Transverse colon (tissue), 4 donors: ENCODE measurements at regions of chr4 and their contacts with region 1.

Region 1: DNA sequence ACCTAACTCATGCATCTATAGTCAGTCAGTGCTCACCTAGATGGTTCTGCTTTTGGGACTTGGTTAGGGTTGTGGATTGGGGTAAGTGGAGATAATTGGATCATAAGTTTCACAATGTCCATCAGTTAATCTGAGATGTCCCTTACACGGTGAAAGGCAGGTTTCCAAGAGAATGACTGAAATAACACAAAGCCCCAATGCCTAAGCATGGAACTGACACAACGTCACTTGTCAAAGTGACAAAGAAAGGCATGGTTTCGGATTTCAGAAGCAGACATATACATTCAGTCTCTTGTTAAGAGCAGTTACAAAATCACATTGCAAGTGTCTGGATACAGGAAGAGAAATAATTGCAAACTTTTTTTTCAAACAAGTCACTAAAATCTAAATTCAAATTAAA is 1456.9 kb downstream of the TECRL start:
- DNase-seq: no peak
- H3K4me3 ChIP-seq: no peak overlapping the region
- H3K27ac ChIP-seq: no peak overlapping the region
- H3K4me1 ChIP-seq: no peaks in the 10 kb centered on the region
- H3K27me3 ChIP-seq: no peaks in the 10 kb centered on the region
- CTCF ChIP-seq: no peak
- EP300 ChIP-seq: no peak
- POLR2A ChIP-seq: no peak

Region 2: DNA sequence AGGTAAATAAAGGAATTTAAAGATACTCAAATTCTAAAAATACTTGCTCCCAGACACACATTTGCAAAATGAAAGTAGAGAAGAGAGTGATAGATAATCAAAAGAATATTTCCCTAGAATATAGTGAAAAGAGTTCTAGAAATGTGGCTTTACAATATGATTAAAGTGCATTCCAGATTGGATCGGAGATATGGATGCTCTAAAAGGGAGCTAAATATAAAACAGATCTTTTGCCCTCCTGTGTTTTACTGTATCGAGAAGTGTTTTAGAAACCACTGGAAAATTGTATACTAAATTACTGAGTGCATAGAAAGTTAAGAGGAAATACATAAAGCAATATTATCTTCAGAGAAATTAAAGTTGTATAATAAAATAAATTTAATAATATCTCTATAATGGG is 64.9 kb after region 1 on chr4:
- in situ Hi-C with region 1: loop called in 1 of 4 experiments (anchors 10 kb)
- intact Hi-C with region 1: no loop called
- DNase-seq: no peak
- H3K4me3 ChIP-seq: no peak overlapping the region
- H3K27ac ChIP-seq: no peak overlapping the region
- H3K4me1 ChIP-seq: no peaks in the 10 kb centered on the region
- H3K27me3 ChIP-seq: no peaks in the 10 kb centered on the region
- CTCF ChIP-seq: no peak
- EP300 ChIP-seq: no peak
- POLR2A ChIP-seq: no peak